RWPE1 (cell line): ENCODE measurements at regions of chr17 and their contacts with region 1.

Region 1: DNA sequence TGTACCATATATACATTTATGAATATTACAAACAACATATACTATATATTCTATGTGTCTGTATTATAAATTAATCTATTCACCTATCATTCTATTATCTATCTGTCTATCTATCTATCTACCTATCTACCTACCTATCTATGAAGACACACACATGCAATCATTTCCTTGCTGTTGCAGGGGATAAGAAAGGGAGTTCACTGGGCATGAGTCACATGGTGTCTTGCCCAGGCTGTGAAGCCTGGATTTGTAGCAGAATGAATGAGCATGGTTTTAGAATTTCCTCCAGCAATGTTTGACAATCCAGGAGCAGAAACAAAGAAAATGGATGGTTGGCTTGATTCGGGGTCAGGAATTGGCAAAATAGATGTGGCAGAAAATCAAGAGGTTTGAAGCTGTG is 23.2 kb upstream of the FAM20A start:
- DNase-seq: peak; percentile 4
- H3K27ac ChIP-seq: no peak overlapping the region
- CTCF ChIP-seq: no peak

Region 2: DNA sequence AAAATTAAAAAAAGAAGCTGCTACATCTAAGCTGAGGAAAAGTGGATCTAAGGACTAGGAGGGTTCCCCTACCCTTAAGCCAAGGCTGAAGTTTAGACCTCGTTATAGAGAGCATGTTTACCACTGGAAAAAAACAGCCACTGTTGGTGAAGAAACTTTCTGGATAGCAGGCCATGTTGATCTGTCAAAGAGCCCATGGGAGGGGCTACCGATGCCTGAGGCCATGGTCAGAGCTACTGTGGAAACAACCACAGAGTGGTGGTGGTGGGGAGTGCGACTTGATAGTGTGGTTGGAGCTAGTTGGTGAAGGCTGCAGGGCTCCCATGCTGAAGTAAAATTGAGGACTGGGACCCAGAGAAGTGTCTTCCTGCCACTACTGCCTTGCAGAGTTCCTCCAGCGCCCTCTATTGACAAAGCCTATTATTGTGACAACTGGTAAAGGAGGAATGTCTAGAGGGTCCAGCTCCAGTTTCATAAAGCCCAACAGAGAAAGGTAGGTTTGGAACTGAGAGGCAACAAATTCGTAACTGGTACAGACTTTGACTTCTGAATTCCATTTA is 10.6 kb before region 1 on chr17:
- CTCF ChIA-PET with region 1: interaction called, 10 read pairs
- POLR2A ChIA-PET with region 1: no interaction called
- DNase-seq: no peak
- H3K27ac ChIP-seq: no peak overlapping the region
- CTCF ChIP-seq: peak; percentile 64